Caco-2 (cell line): ENCODE measurements at regions of chr3 and their contacts with region 1.

Region 1: GRCh38 chr3:128824132-128824850 is 55.1 kb upstream of the ACAD9 start:
- DNase-seq: no peak
- H3K4me3 ChIP-seq: no peak overlapping the region
- H3K4me3 Mint-ChIP-seq: no peak overlapping the region
- H3K27ac Mint-ChIP-seq: no peak overlapping the region
- H3K4me1 ChIP-seq: peaks cover 14% of the 10 kb centered on the region
- H3K4me1 Mint-ChIP-seq: no peaks in the 10 kb centered on the region
- H3K27me3 ChIP-seq: no peaks in the 10 kb centered on the region
- H3K27me3 Mint-ChIP-seq: no peaks in the 10 kb centered on the region
- CTCF ChIP-seq: no peak

Region 2: GRCh38 chr3:128524374-128525299 is 299.7 kb before region 1 on chr3:
- CTCF ChIA-PET with region 1: no interaction called
- POLR2A ChIA-PET with region 1: no interaction called
- intact Hi-C with region 1: no loop called
- DNase-seq: no peak
- H3K4me3 ChIP-seq: no peak overlapping the region
- H3K4me3 Mint-ChIP-seq: no peak overlapping the region
- H3K27ac Mint-ChIP-seq: no peak overlapping the region
- H3K4me1 ChIP-seq: no peaks in the 10 kb centered on the region
- H3K4me1 Mint-ChIP-seq: no peaks in the 10 kb centered on the region
- H3K27me3 ChIP-seq: no peaks in the 10 kb centered on the region
- H3K27me3 Mint-ChIP-seq: peaks cover 2% of the 10 kb centered on the region
- CTCF ChIP-seq: no peak

Region 3: GRCh38 chr3:128725932-128726690 is 98.2 kb before region 1 on chr3 and contains the start of gene RAB7A:
- CTCF ChIA-PET with region 1: no interaction called
- POLR2A ChIA-PET with region 1: no interaction called
- intact Hi-C with region 1: no loop called
- DNase-seq: peak; percentile 98
- H3K4me3 ChIP-seq: peak within 1 kb of the TSS; percentile 86
- H3K4me3 Mint-ChIP-seq: peak within 1 kb of the TSS; percentile 91
- H3K27ac Mint-ChIP-seq: peak within 1 kb of the TSS; percentile 96
- H3K4me1 ChIP-seq: peaks cover 20% of the 10 kb centered on the region
- H3K4me1 Mint-ChIP-seq: peaks cover 13% of the 10 kb centered on the region
- H3K27me3 ChIP-seq: no peaks in the 10 kb centered on the region
- H3K27me3 Mint-ChIP-seq: no peaks in the 10 kb centered on the region
- CTCF ChIP-seq: no peak
- total RNA-seq, gene RAB7A: 262 and 284 TPM in 2 replicates

Region 4: GRCh38 chr3:128849911-128850455 is 25.7 kb after region 1 on chr3:
- CTCF ChIA-PET with region 1: interaction called, 10 read pairs
- POLR2A ChIA-PET with region 1: no interaction called
- intact Hi-C with region 1: no loop called
- DNase-seq: peak in 1 of 2 experiments; percentile 36
- H3K4me3 ChIP-seq: no peak overlapping the region
- H3K4me3 Mint-ChIP-seq: no peak overlapping the region
- H3K27ac Mint-ChIP-seq: no peak overlapping the region
- H3K4me1 ChIP-seq: no peaks in the 10 kb centered on the region
- H3K4me1 Mint-ChIP-seq: no peaks in the 10 kb centered on the region
- H3K27me3 ChIP-seq: no peaks in the 10 kb centered on the region
- H3K27me3 Mint-ChIP-seq: no peaks in the 10 kb centered on the region
- CTCF ChIP-seq: peak; percentile 17 to 22